ENCODE measurements at regions of chr16 and their contacts with region 1.

Region 1: DNA sequence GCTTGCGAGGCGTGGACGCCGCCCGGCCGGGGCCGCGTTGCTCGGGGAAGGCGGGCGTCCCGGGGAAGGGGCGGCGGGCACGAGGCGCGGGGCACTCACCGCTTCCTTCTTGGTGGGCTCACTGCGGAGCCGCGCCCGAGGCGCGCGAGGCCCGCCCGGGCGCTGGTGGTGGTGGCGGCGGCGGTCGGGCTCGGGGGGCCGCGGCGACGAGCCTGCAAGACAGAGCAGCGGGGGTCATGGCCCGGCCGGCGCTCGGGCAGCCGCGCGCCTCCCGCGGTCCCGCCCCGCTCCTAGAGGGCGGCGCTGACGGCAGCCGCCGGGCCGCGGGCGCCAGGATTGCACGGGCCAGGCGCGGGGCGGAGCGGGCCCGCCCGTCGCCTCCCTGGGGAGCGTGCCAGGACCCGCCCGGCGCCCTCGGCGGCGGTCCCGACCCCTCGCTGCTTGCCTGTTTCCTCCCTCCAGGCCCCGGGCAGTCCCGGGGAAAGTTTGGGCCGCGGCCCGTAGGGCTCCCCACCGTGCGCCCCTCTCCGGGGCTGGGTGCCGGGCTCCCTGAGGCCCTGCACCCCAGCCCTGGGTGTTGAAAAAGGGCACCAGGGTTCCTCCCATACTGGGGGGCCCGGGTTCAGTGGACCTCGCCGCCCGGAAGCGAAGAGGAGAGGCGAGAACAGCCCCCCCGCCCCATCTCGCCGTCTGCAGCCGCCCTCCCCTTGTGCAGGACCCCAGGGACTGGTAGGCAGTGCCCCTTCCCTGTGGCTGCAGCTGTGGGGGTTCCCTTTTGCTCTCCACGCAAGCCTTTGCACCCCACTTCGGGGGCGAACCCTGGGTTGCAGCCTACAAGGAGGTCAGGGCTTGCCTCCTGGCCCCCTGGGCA is at the start of gene C16orf74:
- DNase-seq: peak; percentile 34
- H3K4me3 ChIP-seq: peak within 1 kb of the TSS; percentile 35 to 49 (median 39)
- H3K27ac ChIP-seq: peak within 1 kb of the TSS; percentile 50
- H3K4me1 ChIP-seq: peaks cover 28% of the 10 kb centered on the region
- H3K27me3 ChIP-seq: no peaks in the 10 kb centered on the region
- CTCF ChIP-seq: no peak
- POLR2A ChIP-seq: no peak
- total RNA-seq, gene C16orf74: 30.9 and 38.7 TPM in 2 replicates

Region 2: GRCh38 chr16:85601730-85602401 is 149.2 kb before region 1 on chr16:
- CTCF ChIA-PET with region 1: no interaction called
- POLR2A ChIA-PET with region 1: no interaction called
- dilution Hi-C with region 1: no loop called
- intact Hi-C with region 1: no loop called
- DNase-seq: no peak
- H3K4me3 ChIP-seq: no peak overlapping the region
- H3K27ac ChIP-seq: no peak overlapping the region
- H3K4me1 ChIP-seq: no peaks in the 10 kb centered on the region
- H3K27me3 ChIP-seq: no peaks in the 10 kb centered on the region
- CTCF ChIP-seq: no peak
- POLR2A ChIP-seq: no peak

Region 3: DNA sequence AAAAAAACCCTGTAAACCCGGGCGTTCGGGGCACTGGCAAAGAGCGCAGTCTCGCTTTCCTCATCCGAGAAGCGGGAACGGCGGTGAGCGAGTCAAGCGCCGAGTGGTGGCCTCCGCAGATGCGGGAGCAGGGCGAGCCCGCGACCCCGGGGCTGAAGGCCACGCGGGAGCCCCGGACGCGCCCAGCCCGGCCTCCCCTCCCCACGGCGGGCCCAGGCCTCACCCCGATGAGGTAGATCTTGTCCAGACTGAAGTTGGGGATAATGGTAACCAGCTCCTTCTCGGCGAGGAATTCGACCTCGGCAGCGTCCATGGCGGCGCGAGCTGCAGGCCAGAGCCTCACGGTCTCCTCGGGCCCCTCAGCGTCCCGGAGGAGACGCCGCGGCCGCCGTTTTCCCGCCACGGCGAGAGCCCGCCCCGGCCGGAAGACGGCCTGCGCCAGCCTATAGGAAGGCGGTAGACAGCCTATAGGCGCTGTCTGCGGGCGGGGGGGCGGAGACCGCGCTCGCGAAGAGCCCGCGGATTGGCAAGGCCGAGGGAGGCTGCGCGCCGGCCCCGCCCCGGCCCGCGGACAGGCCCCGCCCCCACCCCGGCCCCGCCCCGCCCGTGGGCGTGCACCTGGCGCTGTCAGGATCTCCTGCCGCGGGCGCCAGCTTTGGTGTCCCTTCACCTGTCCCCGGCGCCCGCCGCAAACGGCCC is 62.3 kb before region 1 on chr16 and contains the start of gene GINS2:
- CTCF ChIA-PET with region 1: no interaction called
- POLR2A ChIA-PET with region 1: no interaction called
- dilution Hi-C with region 1: no loop called
- intact Hi-C with region 1: loop called (anchors 2 kb)
- DNase-seq: peak; percentile 87
- H3K4me3 ChIP-seq: peak within 1 kb of the TSS; percentile 30 to 60 (median 47)
- H3K27ac ChIP-seq: no peak within 1 kb of the TSS
- H3K4me1 ChIP-seq: no peaks in the 10 kb centered on the region
- H3K27me3 ChIP-seq: no peaks in the 10 kb centered on the region
- CTCF ChIP-seq: no peak
- POLR2A ChIP-seq: peak; percentile 37
- total RNA-seq, gene GINS2: 24.1 and 26.7 TPM in 2 replicates

Region 4: GRCh38 chr16:85768199-85768598 is 17.1 kb after region 1 on chr16:
- CTCF ChIA-PET with region 1: interaction called, 3 read pairs
- POLR2A ChIA-PET with region 1: no interaction called
- dilution Hi-C with region 1: no loop called
- intact Hi-C with region 1: loop called (anchors 2 kb)
- DNase-seq: no peak
- H3K4me3 ChIP-seq: no peak overlapping the region
- H3K27ac ChIP-seq: peak overlapping the region; percentile 5
- H3K4me1 ChIP-seq: peaks cover 9% of the 10 kb centered on the region
- H3K27me3 ChIP-seq: no peaks in the 10 kb centered on the region
- CTCF ChIP-seq: no peak
- POLR2A ChIP-seq: no peak

Region 5: DNA sequence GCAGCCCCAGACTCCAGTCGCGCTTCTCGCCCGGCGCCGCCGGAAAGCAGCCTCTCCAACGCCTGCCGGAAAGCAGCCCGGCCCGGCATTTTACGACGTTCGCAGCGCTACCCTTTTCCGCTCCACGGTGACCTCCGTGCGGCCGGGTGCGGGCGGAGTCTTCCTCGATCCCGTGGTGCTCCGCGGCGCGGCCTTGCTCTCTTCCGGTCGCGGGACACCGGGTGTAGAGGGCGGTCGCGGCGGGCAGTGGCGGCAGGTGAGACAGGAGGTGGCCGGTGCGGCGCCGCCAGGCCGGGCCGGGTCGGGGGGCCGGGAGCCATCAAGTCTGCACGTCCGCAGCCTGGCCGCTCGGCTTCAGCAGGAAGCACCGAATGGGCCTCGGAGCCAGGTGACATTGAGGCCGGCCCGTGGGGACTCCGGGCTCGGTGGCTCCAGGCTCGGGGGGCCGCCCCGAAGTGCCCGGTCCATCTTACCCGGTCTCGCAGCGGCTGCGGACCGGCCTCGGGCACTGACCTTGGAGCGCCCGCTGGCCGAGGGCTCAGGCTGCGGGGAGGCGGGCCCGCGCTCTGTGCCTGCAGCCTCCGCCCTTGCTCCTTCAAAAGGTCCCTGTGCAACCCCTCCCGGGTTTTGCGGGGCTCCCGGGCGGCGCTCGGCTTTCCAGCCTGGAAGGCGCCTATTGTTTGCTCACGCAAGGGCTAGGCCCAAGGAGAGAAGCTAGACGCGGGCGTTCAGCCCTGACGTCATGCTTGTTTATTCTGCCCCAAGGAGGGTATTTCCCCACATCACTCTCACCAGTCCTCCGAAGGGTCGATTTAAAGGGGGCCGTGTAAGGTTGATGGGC is 48.7 kb after region 1 on chr16 and contains the starts of genes COX4I1 and EMC8:
- CTCF ChIA-PET with region 1: no interaction called
- POLR2A ChIA-PET with region 1: no interaction called
- dilution Hi-C with region 1: no loop called
- intact Hi-C with region 1: loop called (anchors 1 kb)
- DNase-seq: peak; percentile 92
- H3K4me3 ChIP-seq: peak within 1 kb of the TSS; percentile 52 to 99 (median 85)
- H3K27ac ChIP-seq: peak within 1 kb of the TSS; percentile 96
- H3K4me1 ChIP-seq: peaks cover 14% of the 10 kb centered on the region
- H3K27me3 ChIP-seq: no peaks in the 10 kb centered on the region
- CTCF ChIP-seq: no peak
- POLR2A ChIP-seq: peak; percentile 79
- total RNA-seq, gene COX4I1: 535 and 560 TPM in 2 replicates
- total RNA-seq, gene EMC8: 51.1 and 51.2 TPM in 2 replicates

Measured in endothelial cell of umbilical vein (primary cell).